ENCODE measurements at regions of chr12 and their contacts with region 1.

Region 1: GRCh38 chr12:82685790-82686167 is 927 bp upstream of the TMTC2 start:
- DNase-seq: peak; percentile 92 to 93
- H3K4me3 ChIP-seq: peak overlapping the region; percentile 71
- H3K4me3 Mint-ChIP-seq: peak overlapping the region; percentile 84
- H3K27ac Mint-ChIP-seq: peak overlapping the region; percentile 37
- H3K4me1 ChIP-seq: no peaks in the 10 kb centered on the region
- H3K4me1 Mint-ChIP-seq: peaks cover 12% of the 10 kb centered on the region
- H3K27me3 ChIP-seq: no peaks in the 10 kb centered on the region
- H3K27me3 Mint-ChIP-seq: peaks cover 8% of the 10 kb centered on the region
- CTCF ChIP-seq: peak; percentile 78 to 80

Region 2: GRCh38 chr12:82527165-82527780 is 158.5 kb before region 1 on chr12:
- CTCF ChIA-PET with region 1: interaction called, 3 read pairs
- POLR2A ChIA-PET with region 1: no interaction called
- intact Hi-C with region 1: loop called (anchors 1 kb)
- DNase-seq: peak in 1 of 2 experiments; percentile 58
- H3K4me3 ChIP-seq: no peak overlapping the region
- H3K4me3 Mint-ChIP-seq: no peak overlapping the region
- H3K27ac Mint-ChIP-seq: no peak overlapping the region
- H3K4me1 ChIP-seq: peaks cover 9% of the 10 kb centered on the region
- H3K4me1 Mint-ChIP-seq: peaks cover 9% of the 10 kb centered on the region
- H3K27me3 ChIP-seq: no peaks in the 10 kb centered on the region
- H3K27me3 Mint-ChIP-seq: peaks cover 2% of the 10 kb centered on the region
- CTCF ChIP-seq: peak; percentile 81 to 84

Region 3: DNA sequence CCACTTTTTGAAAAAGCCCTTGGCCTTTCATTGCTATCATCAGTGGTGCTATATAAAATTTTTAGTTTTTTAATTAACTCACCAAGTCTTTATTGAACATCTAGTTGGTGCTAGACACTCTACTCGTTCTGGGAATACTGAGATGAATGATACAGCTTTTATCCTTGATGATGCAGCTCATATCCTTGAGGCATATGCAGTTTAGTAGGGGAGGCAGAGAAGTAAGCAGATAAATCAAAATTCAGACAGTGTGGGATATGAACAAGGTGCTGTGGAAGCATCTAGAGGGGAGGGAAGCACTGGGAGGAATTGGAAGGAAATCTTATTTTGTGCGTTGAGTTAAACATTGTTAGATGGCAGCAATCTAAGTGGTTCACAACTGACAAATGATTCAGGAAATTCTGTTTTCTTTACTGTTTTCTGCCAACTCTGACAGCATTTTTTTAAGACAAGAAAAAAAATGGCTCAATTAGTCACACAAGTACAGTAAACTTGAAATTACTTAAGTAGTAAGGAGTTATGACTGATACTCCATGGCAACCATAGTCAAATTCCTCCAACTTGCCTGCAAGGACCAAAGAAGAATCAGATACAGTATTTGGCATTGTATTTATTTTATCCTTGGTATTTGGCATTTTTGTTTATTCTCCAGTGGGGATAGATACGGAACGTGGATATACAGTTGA is 120.2 kb after region 1 on chr12:
- CTCF ChIA-PET with region 1: no interaction called
- POLR2A ChIA-PET with region 1: no interaction called
- intact Hi-C with region 1: loop called (anchors 5 kb)
- DNase-seq: no peak
- H3K4me3 ChIP-seq: no peak overlapping the region
- H3K4me3 Mint-ChIP-seq: no peak overlapping the region
- H3K27ac Mint-ChIP-seq: peak overlapping the region; percentile 13
- H3K4me1 ChIP-seq: peaks cover 5% of the 10 kb centered on the region; the same call in 1 of the 2 replicates
- H3K4me1 Mint-ChIP-seq: peaks cover 6% of the 10 kb centered on the region
- H3K27me3 ChIP-seq: no peaks in the 10 kb centered on the region
- H3K27me3 Mint-ChIP-seq: no peaks in the 10 kb centered on the region
- CTCF ChIP-seq: no peak

Region 4: GRCh38 chr12:82952946-82953345 is 267.2 kb after region 1 on chr12:
- CTCF ChIA-PET with region 1: no interaction called
- POLR2A ChIA-PET with region 1: no interaction called
- intact Hi-C with region 1: loop called (anchors 5 kb)
- DNase-seq: no peak
- H3K4me3 ChIP-seq: no peak overlapping the region
- H3K4me3 Mint-ChIP-seq: no peak overlapping the region
- H3K27ac Mint-ChIP-seq: no peak overlapping the region
- H3K4me1 ChIP-seq: no peaks in the 10 kb centered on the region
- H3K4me1 Mint-ChIP-seq: peaks cover 8% of the 10 kb centered on the region
- H3K27me3 ChIP-seq: no peaks in the 10 kb centered on the region
- H3K27me3 Mint-ChIP-seq: no peaks in the 10 kb centered on the region
- CTCF ChIP-seq: no peak

Region 5: DNA sequence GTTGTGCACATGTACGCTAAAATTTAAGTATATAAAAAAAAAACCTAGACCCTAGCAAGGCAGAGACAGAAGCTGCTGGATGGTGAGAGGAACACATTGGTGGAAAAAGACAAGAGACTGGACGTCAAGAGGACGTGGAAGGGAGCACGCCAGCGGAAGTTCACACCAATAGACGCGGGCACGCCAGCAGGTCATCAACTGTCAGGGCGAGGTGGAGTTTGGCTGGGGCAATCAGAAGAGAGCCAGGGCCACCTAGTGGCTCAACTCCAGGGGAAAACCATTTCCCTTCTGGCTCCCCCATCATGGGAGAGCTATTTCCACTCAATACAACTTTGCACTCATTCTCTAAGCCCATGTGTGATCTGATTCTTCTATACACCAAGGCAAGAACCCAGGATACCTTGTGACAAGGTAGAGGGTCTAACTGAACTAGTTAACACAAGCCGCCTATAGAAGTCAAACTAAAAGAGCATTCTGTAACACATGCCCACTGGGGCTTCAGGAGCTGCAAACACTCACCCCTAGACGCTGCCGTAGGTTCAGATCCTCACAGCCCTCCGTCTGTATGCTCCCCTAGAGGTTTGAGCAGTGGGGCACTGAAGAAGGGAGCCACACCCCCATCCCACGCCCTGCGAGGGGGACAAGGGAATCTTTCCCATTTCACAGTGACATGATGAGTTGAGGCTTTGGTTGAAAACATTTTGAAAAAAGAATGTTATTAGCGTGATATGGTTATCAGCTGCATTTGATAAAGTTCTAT is 703.6 kb after region 1 on chr12:
- CTCF ChIA-PET with region 1: interaction called, 6 read pairs
- POLR2A ChIA-PET with region 1: no interaction called
- intact Hi-C with region 1: loop called (anchors 1 kb)
- DNase-seq: peak; percentile 34 to 42
- H3K4me3 ChIP-seq: no peak overlapping the region
- H3K4me3 Mint-ChIP-seq: no peak overlapping the region
- H3K27ac Mint-ChIP-seq: no peak overlapping the region
- H3K4me1 ChIP-seq: no peaks in the 10 kb centered on the region
- H3K4me1 Mint-ChIP-seq: no peaks in the 10 kb centered on the region
- H3K27me3 ChIP-seq: no peaks in the 10 kb centered on the region
- H3K27me3 Mint-ChIP-seq: no peaks in the 10 kb centered on the region
- CTCF ChIP-seq: peak; percentile 42 to 46

Measured in Caco-2 (cell line).